ENCODE measurements at regions of chr11 and their contacts with region 1.

Region 1: DNA sequence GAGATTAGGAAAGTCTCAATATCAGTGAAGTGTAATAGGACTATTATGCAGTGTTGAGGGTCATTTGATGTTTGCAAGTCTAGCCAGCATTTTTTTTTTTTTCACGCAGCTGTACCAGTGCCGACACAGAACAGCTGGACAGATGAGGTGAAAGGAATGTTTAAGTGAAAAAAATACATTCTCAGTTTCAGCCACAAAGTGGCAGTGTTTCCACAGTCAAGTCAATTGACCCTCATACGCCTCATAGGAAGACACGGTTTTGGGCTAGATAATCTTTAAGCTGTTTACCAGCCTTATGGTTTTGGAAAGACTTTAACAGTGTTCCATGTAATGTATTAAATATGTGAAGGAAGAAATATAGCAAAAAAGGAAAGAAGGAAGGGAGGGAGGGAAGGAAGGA is 349.9 kb upstream of the ANO3 start:
- DNase-seq: no peak
- ATAC-seq: peak; percentile 90

Region 2: GRCh38 chr11:26106726-26107125 is 124.7 kb after region 1 on chr11:
- intact Hi-C with region 1: no loop called
- DNase-seq: no peak
- ATAC-seq: no peak

Region 3: DNA sequence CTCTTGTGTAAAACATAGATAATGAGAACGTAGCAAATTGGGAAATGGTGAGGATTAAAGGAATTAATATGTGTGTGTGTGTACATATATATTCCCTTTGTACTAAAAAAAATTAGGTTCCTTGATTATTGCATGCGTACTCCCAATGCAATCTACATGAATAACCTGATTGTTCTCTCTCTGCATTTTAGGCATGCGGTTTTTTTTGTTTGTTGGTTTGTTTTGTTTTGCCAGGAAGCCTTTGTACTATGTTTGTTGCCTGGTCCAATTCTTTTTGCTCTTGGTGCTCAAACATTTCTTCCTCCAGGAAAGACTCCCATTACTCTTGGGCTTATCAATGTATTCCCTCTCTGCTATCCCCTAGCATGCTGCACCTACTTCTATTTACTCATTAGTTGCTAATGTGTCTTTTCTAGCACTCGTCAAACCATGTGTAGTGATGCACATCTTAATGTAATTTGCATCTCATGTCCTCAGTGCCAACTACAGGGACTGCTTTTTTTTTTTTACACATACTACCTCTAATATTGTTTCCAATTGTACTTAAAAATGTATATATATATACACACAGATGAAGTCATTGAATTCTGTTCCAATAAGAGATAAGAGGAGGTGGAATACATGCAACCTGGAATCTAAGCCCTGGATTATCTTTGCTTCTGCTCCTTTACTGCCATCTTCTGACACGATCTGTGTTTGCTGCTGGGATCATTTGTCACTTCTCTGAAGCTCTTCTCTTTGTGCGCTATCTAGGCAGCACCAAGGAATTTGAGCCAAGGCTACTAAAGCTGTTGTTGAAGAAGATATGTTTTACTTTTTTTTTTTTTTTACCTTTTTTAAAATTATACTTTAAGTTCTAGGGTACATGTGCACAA is 152.7 kb after region 1 on chr11:
- intact Hi-C with region 1: loop called (anchors 5 kb)
- DNase-seq: no peak
- ATAC-seq: no peak

Region 4: DNA sequence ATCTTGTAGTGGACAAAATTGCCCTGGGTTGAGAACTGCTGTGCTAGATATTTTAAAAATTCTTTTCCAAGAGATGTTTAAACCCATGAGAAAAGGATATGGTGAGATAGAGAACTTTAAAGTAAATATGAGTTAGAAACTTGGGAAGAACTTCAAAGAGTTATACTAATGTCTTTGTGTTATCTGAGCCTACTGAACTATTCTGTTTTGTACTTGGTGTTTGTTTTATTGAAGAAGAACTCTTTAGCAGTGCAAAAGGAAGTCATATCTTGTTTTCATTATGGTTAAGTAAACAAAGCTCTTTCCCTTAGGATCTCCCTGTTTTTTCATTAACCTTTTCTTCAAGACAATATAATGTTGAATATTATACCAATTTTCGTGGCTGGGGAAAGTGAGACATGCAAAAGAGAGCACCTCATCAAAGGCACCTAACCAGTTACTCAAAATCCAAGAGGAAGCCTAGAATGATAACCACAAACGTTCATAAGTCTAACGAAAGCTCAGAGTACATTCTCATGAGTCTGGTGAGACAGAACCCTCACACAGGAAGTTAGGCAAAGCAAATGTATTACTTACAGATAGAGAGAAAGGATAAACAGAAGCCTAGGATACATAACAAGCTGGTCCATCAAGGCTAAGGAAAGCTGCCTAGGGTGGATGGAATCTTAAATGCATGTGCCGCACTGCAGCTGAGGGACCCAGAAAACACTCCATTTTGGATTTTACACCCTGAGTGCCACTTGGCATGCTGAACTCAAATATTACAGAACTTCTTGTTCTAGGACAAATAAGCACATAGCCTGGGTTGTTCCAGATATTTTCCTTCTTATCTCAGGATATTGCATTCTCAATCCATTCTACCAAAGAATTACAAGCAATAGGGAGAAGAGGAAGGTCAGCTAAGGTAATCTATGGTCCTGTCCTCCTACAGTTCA is 237.5 kb after region 1 on chr11:
- intact Hi-C with region 1: loop called (anchors 5 kb)
- DNase-seq: no peak
- ATAC-seq: peak; percentile 45

Region 5: GRCh38 chr11:26276798-26277424 is 294.9 kb after region 1 on chr11:
- intact Hi-C with region 1: loop called (anchors 5 kb)
- DNase-seq: no peak
- ATAC-seq: peak; percentile 75